ENCODE measurements at regions of chr10 and their contacts with region 1.

Region 1: DNA sequence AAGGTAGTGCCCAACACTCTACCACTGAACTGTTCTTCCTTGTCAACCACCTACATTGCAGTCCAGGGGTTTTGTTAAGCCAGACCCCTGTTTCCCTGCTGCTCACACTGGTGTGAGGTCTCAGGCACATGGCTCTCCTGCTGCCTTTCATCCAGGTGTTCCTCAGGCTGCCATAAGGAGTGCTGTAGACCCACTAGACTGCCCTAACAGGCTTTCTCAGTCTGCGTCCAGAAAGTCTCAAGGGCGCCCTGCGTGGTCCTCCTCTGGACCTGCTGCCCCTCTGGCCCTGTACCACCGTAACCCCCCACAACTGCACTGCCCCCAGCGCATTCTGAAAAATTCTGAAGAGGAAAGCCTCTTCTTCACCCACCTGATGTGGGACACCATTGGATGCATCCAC is 225.7 kb upstream of the ANKRD30A start:
- DNase-seq: no peak
- H3K4me3 ChIP-seq: no peak overlapping the region
- H3K27ac ChIP-seq: no peak overlapping the region
- H3K4me1 ChIP-seq: no peaks in the 10 kb centered on the region
- H3K27me3 ChIP-seq: no peaks in the 10 kb centered on the region
- CTCF ChIP-seq: no peak

Region 2: DNA sequence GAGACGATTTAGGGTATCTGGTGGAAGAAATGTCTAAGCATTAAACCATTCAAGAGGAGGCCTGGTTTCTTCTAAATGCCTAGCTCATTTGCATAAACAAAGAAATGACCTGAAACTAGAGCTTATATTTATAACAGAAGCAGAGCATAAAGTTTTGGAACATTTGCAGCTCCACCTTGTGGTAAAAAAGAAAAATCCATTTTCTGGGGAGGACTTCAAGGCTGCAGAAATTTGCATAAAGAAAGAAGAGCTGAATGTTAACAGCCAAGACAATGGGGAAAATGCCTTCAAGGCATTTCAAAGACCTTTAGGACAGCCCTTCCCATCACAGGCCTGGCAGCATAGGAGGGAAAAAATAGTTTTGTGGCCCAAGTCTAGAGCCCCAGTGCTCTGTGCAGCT is 595.8 kb after region 1 on chr10:
- CTCF ChIA-PET with region 1: no interaction called
- POLR2A ChIA-PET with region 1: no interaction called
- intact Hi-C with region 1: loop called (anchors 10 kb)
- DNase-seq: peak; percentile 21
- H3K4me3 ChIP-seq: no peak overlapping the region
- H3K27ac ChIP-seq: no peak overlapping the region
- H3K4me1 ChIP-seq: no peaks in the 10 kb centered on the region
- H3K27me3 ChIP-seq: no peaks in the 10 kb centered on the region
- CTCF ChIP-seq: peak; percentile 39